ENCODE measurements at regions of chr6 and their contacts with region 1.

Region 1: DNA sequence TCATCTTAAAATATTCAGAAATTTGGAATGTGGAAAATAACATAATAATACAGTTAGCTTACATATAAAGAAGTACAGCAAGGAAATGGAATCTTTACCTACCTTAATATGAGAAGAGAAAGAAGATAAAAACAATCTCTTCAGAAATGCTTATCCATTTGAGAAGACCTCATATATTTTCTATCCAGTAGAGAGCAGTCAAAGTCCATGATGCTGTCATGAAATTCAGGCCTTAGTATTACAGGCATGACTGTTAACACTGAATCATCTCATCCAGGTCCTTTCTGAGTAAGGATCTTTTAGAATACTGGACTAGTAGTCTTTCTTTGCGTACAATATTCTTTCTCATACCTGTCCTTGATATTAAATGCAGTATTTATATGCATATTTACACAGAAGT is 713.4 kb downstream of the CD109 start:
- DNase-seq: peak; percentile 77
- H3K4me3 ChIP-seq: no peak overlapping the region
- H3K27ac ChIP-seq: no peak overlapping the region
- H3K4me1 ChIP-seq: no peaks in the 10 kb centered on the region
- H3K27me3 ChIP-seq: no peaks in the 10 kb centered on the region
- CTCF ChIP-seq: peak; percentile 14 to 23
- POLR2A ChIP-seq: no peak

Region 2: DNA sequence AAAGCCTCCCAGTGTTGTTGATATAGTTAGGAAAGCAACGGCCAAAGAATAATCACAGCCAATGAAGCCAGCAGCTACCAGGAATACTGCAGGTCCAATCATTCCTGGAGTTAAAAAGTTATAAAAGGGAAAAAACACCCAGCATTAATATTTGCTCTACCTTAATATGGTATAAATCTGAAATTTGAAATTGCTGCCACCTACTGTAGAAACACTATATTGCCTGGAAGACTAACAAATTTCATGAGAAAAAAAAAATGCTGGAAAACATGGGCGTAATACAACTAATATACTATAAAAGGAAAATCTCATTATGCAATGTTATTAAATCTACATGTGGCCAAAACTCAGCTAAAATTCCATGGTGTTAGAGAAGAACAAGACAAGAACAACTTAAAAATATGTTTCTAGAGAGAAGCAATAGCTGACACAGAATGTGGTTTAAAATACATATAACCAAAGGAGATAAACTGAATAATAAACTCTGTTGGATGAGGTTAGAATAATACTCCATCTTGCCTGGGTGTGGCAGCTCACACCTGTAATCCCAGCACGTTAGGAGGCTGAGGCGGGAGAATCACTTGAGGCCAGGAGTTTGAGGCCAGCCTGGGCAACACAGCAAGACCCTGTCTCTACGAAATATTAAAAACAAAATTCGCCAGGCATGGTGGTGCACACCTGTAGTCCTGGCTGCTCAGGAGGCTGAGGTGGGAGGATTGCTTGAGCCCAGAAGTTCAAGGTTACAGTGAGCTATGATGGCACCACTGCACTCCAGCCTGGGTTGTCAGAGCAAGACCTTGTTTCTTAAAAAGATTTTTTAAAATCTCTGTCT is 798.8 kb before region 1 on chr6:
- CTCF ChIA-PET with region 1: no interaction called
- POLR2A ChIA-PET with region 1: no interaction called
- dilution Hi-C with region 1: no loop called
- intact Hi-C with region 1: no loop called
- DNase-seq: peak; percentile 77
- H3K4me3 ChIP-seq: no peak overlapping the region
- H3K27ac ChIP-seq: no peak overlapping the region
- H3K4me1 ChIP-seq: no peaks in the 10 kb centered on the region
- H3K27me3 ChIP-seq: no peaks in the 10 kb centered on the region
- CTCF ChIP-seq: peak; percentile 28 to 31
- POLR2A ChIP-seq: no peak

Region 3: DNA sequence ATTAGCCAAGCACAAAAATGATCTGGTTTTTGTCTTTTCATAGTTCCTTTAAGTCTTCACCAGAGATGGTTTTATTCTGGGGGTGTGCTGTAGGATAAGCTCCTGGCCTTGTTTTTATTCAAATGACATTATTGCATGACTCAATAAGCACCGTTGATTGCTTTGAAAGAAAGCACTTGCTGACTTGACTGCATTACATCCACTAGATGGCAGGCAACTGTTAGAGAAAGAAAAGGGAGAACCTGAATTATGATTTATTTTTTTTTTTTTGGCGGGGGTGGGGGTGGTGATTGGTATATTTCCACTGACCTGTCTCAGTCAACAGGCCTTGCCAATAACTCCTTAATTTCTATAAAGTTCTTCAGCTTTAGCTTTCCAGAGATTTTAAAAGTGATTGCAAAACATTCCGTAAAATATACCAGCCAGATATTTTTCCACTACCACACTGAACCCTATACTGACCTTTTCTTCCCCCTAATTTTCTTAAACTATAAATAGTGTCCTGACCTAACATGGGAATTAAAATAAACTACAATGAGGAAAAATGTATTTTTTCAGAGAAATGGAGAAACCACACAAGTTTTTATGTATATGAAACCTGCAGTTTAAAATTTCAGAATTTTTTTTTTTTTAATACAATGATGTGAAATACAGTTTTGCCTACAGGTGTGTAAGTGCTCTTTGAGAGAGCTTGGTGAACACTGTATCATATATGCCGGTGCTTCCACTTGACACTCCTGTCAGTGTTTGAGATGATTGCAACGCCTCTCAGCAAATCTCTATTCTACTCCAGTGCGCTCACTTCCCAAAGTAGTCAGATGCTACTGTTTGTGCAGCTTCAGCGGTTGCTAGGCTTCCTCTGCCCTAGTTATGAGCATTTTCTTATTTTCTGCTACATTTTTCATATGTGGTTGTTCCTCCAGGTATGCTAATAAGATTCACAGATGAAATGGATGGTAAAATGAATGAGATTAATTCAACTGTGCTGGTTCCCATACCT is 439.2 kb before region 1 on chr6:
- CTCF ChIA-PET with region 1: no interaction called
- POLR2A ChIA-PET with region 1: no interaction called
- dilution Hi-C with region 1: no loop called
- intact Hi-C with region 1: loop called (anchors 2 kb)
- DNase-seq: peak; percentile 56
- H3K4me3 ChIP-seq: no peak overlapping the region
- H3K27ac ChIP-seq: no peak overlapping the region
- H3K4me1 ChIP-seq: peaks cover 8% of the 10 kb centered on the region
- H3K27me3 ChIP-seq: peaks cover 3 to 4% of the 10 kb centered on the region in 2 experiments
- CTCF ChIP-seq: peak; percentile 48 to 53
- POLR2A ChIP-seq: no peak

Region 4: DNA sequence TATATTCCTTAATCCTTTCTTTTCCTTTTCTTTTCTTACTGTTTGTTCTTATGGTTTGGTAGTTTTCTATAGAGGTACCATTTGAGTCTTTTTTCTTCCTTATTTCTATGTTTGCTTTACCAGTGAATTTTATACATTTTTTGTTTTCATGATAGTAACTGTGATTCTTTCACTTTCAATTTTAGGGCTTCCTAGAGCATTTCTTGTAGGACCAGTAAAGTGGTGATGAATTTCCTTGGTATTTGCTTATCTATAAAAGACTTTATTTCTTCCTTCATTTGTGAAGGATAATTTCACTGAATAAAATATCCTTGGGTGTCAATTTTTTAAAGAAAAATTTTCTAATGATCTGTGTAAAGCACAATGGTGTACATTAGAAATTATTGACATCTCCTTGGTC is 76.0 kb before region 1 on chr6:
- CTCF ChIA-PET with region 1: no interaction called
- POLR2A ChIA-PET with region 1: no interaction called
- dilution Hi-C with region 1: no loop called
- intact Hi-C with region 1: no loop called
- DNase-seq: no peak
- H3K4me3 ChIP-seq: no peak overlapping the region
- H3K27ac ChIP-seq: no peak overlapping the region
- H3K4me1 ChIP-seq: no peaks in the 10 kb centered on the region
- H3K27me3 ChIP-seq: no peaks in the 10 kb centered on the region
- CTCF ChIP-seq: no peak
- POLR2A ChIP-seq: no peak

Region 5: GRCh38 chr6:74574794-74575193 is 165.3 kb after region 1 on chr6:
- CTCF ChIA-PET with region 1: interaction called, 10 read pairs
- POLR2A ChIA-PET with region 1: no interaction called
- dilution Hi-C with region 1: no loop called
- intact Hi-C with region 1: loop called (anchors 1 kb)
- DNase-seq: peak; percentile 50
- H3K4me3 ChIP-seq: no peak overlapping the region
- H3K27ac ChIP-seq: no peak overlapping the region
- H3K4me1 ChIP-seq: peaks cover 4% of the 10 kb centered on the region
- H3K27me3 ChIP-seq: no peaks in the 10 kb centered on the region
- CTCF ChIP-seq: peak; percentile 39 to 56
- POLR2A ChIP-seq: no peak

Region 6: GRCh38 chr6:74705451-74705850 is 296.0 kb after region 1 on chr6:
- CTCF ChIA-PET with region 1: no interaction called
- POLR2A ChIA-PET with region 1: no interaction called
- dilution Hi-C with region 1: no loop called
- intact Hi-C with region 1: no loop called
- DNase-seq: no peak
- H3K4me3 ChIP-seq: no peak overlapping the region
- H3K27ac ChIP-seq: no peak overlapping the region
- H3K4me1 ChIP-seq: no peaks in the 10 kb centered on the region
- H3K27me3 ChIP-seq: no peaks in the 10 kb centered on the region
- CTCF ChIP-seq: no peak
- POLR2A ChIP-seq: no peak

Region 7: GRCh38 chr6:74964871-74965441 is 555.5 kb after region 1 on chr6:
- CTCF ChIA-PET with region 1: no interaction called
- POLR2A ChIA-PET with region 1: no interaction called
- dilution Hi-C with region 1: no loop called
- intact Hi-C with region 1: no loop called
- DNase-seq: peak; percentile 30
- H3K4me3 ChIP-seq: no peak overlapping the region
- H3K27ac ChIP-seq: no peak overlapping the region
- H3K4me1 ChIP-seq: peaks cover 9% of the 10 kb centered on the region
- H3K27me3 ChIP-seq: no peaks in the 10 kb centered on the region
- CTCF ChIP-seq: peak; percentile 0 to 8
- POLR2A ChIP-seq: no peak